ENCODE measurements at regions of chr4 and their contacts with region 1.

Region 1: DNA sequence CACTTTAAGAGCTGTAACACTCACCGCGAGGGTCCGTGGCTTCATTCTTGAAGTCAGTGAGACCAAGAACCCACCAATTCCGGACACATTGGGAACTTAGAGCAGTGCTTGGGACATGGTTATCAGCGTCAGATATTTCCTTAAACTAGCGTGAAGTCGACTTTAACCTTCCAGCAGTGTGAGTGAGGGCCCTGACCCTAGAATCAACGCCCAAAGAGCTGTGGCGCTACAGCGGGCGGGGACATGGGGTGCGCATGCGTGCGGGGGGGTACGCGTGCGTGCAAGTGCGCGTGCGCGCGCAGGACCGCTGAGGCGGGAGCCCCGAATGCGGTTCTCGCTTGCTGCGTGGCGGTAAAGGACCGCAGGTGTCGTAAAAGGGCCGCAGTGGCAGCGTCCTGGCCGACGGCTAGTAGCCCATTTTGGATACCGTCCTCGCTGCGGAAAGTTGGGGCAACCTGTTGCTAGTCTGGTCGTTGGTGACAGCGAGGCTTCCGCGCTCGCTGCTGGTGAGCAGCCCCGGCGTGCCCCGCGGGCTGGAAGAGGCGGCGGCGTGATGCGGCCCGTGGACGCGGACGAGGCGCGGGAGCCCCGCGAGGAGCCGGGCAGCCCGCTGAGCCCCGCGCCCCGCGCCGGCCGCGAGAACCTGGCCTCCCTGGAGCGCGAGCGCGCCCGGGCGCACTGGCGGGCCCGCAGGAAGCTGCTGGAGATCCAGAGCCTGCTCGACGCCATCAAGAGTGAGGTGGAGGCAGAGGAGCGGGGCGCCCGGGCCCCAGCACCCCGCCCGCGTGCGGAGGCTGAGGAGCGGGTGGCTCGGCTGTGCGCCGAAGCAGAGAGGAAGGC is 19.8 kb upstream of the S100P start:
- DNase-seq: peak; percentile 95
- ATAC-seq: peak; percentile 81
- H3K4me3 Mint-ChIP-seq: peak overlapping the region; percentile 90
- H3K27ac Mint-ChIP-seq: peak overlapping the region; percentile 99
- H3K4me1 Mint-ChIP-seq: peaks cover 42% of the 10 kb centered on the region
- H3K27me3 Mint-ChIP-seq: no peaks in the 10 kb centered on the region
- CTCF ChIP-seq: no peak

Region 2: DNA sequence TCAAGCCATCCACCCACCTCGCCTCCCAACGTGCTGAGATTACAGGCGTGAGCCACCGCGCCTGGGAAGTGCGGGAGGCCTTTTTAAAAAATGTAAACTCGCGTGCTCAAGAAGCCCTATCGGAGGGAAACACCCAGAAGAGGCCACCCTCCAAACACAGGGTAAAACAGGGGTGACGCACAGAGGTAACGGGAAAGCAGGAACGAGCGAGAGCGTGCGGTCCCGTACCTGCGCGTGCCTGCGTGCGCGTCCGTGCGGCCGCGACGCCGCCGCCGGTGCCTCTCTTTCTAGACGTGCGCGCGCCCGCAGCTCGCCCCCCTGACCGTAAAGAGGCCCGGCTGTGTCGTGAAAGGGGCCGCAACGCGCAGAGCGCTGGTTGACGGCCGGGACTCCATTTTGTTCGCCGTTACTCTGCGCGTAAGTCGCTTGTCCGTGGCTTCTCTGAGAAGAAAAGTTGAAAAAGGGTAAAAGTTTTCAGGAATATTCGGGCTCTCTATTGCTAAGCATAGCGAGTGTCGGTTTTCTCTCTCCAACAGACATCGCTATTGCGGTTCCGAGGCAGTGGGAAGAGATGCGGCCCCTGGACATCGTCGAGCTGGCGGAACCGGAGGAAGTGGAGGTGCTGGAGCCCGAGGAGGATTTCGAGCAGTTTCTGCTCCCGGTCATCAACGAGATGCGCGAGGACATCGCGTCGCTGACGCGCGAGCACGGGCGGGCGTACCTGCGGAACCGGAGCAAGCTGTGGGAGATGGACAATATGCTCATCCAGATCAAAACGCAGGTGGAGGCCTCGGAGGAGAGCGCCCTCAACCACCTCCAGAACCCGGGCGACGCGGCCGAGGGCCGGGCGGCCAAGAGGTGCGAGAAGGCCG is 33.4 kb before region 1 on chr4 and contains the start of gene MRFAP1:
- CTCF ChIA-PET with region 1: interaction called, 9 read pairs
- POLR2A ChIA-PET with region 1: interaction called, 68 read pairs
- intact Hi-C with region 1: no loop called
- DNase-seq: peak; percentile 96
- ATAC-seq: peak; percentile 84
- H3K4me3 Mint-ChIP-seq: peak within 1 kb of the TSS; percentile 98
- H3K27ac Mint-ChIP-seq: peak within 1 kb of the TSS; percentile 99
- H3K4me1 Mint-ChIP-seq: peaks cover 29% of the 10 kb centered on the region
- H3K27me3 Mint-ChIP-seq: no peaks in the 10 kb centered on the region
- CTCF ChIP-seq: no peak
- total RNA-seq, gene MRFAP1: 106 to 107 TPM

Region 3: GRCh38 chr4:6658597-6659075 is 15.2 kb before region 1 on chr4:
- CTCF ChIA-PET with region 1: interaction called, 10 read pairs
- POLR2A ChIA-PET with region 1: interaction called, 39 read pairs
- intact Hi-C with region 1: no loop called
- DNase-seq: peak; percentile 59
- ATAC-seq: peak; percentile 84
- H3K4me3 Mint-ChIP-seq: peak overlapping the region; percentile 57
- H3K27ac Mint-ChIP-seq: no peak overlapping the region
- H3K4me1 Mint-ChIP-seq: peaks cover 6% of the 10 kb centered on the region
- H3K27me3 Mint-ChIP-seq: peaks cover 16% of the 10 kb centered on the region
- CTCF ChIP-seq: no peak

Region 4: DNA sequence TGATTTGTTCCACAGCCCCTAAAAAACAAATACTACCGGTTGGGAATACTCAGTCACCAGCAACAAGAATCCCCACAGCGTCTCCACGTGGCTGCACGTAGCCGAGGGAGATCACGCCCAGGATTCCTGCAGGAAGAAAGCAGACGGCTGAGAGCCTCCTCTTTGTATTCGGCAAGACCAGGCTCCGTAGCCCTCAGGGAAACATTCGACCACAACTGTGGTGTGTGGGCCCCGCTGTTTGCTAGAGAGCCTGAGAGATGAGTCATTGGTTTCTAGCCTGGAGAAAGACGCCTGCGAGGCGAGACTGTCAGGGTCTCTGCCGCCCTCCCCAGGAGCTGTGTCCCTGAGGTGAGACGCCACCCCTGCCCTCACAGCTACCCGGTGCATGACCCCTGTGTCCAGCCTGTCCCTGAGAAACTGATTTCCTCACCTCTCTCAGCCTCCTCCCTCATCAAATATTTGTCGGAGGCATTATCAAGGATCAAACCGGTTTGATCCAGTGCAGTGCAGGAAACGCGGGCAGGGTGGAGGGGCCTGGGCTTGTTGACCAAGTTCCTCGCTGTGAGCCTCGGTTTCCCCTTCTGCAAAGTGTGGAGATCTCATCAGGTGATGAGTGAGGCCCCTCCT is 15.1 kb after region 1 on chr4:
- CTCF ChIA-PET with region 1: interaction called, 40 read pairs
- POLR2A ChIA-PET with region 1: interaction called, 74 read pairs
- intact Hi-C with region 1: loop called (anchors 2 kb)
- DNase-seq: peak; percentile 96
- ATAC-seq: peak; percentile 85
- H3K4me3 Mint-ChIP-seq: peak overlapping the region; percentile 74
- H3K27ac Mint-ChIP-seq: peak overlapping the region; percentile 93
- H3K4me1 Mint-ChIP-seq: peaks cover 70% of the 10 kb centered on the region
- H3K27me3 Mint-ChIP-seq: no peaks in the 10 kb centered on the region
- CTCF ChIP-seq: no peak

Region 5: DNA sequence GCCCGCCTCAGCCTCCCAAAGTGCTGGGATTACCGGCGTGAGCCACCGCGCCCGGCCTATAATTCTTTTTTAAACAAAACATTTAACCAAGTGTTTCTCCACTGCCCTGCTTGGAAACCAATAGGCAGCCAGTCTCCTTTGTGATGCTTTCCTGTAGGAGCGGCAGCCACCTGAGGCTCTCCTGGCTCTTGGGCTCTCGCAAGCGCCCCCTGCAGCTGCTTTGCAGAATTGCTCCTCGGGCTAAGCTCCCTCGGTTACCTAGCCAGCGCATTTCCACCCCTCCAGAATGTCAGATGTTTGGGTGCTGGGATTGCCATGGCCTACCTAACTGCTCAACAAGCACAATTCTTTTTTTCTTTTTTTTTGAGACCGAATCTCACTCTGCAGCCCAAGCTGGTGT is 27.5 kb after region 1 on chr4:
- CTCF ChIA-PET with region 1: interaction called, 102 read pairs
- POLR2A ChIA-PET with region 1: interaction called, 75 read pairs
- intact Hi-C with region 1: loop called (anchors 5 kb)
- DNase-seq: peak; percentile 63
- ATAC-seq: no peak
- H3K4me3 Mint-ChIP-seq: no peak overlapping the region
- H3K27ac Mint-ChIP-seq: no peak overlapping the region
- H3K4me1 Mint-ChIP-seq: peaks cover 63% of the 10 kb centered on the region
- H3K27me3 Mint-ChIP-seq: no peaks in the 10 kb centered on the region
- CTCF ChIP-seq: peak; percentile 61

Region 6: DNA sequence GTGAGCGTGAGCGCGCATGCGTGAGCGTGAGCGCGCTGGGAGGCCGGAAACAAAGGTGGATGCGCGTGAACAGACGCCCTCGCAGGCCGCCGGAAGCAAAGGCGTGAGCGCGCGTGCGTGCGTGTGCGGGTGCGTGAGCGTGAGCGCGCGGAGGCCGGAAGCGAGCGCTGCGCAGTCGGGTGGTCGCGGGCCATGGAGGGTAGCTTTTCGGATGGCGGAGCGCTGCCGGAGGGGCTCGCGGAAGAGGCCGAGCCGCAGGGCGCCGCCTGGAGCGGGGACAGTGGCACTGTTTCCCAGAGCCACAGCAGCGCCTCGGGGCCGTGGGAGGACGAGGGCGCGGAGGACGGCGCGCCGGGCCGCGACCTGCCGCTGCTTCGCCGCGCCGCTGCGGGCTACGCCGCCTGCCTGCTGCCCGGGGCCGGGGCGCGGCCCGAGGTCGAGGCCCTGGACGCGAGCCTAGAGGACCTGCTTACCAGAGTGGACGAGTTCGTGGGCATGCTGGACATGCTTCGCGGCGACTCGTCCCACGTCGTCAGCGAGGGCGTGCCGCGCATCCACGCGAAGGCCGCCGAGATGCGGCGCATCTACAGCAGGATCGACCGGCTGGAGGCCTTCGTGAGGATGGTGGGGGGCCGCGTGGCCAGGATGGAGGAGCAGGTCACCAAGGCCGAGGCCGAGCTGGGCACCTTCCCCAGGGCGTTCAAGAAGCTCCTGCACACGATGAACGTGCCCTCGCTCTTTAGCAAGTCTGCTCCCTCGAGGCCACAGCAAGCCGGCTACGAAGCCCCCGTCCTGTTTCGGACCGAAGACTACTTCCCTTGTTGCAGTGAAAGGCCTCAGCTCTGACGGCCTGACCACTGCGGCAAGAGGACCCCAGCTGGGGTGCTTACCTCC is 42.4 kb after region 1 on chr4 and contains the start of gene BLOC1S4:
- CTCF ChIA-PET with region 1: interaction called, 40 read pairs
- POLR2A ChIA-PET with region 1: interaction called, 75 read pairs
- intact Hi-C with region 1: loop called (anchors 5 kb)
- DNase-seq: peak; percentile 91
- ATAC-seq: peak; percentile 82
- H3K4me3 Mint-ChIP-seq: peak within 1 kb of the TSS; percentile 90
- H3K27ac Mint-ChIP-seq: peak within 1 kb of the TSS; percentile 92
- H3K4me1 Mint-ChIP-seq: peaks cover 31% of the 10 kb centered on the region
- H3K27me3 Mint-ChIP-seq: no peaks in the 10 kb centered on the region
- CTCF ChIP-seq: no peak
- total RNA-seq, gene BLOC1S4: 19.1 to 21.8 TPM

Region 7: DNA sequence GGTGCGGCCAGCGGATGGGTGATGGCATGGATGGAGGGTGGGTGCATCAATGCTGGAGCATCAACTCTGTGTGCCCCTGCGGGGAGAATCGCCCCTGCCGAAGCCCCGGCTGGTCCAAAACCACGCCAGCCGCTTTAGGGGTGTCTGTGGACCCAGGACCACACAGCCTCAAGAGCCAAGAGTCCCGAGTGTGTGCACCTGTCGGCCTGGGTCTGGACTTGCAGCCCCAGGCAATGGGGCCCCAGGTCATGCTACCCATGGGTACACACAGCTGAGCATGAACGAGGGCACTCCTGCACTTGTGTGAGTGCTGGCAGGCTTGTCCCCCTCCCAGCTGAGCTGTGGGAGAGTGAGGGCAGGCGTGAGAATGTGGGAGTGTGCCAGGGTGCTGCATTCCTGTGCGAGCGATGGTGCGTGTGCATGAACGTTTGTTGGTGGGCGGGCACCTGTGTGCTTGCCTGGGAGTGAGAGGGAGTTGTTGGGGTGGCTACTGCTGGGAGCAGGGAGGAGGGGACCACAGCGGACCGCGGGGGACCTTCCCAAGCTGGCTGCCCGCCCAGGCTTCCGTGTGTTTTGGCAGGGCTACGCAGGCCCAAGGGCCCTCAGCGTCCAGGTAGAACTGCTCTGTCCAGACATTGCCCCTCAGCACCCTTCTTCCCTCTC is 72.9 kb after region 1 on chr4:
- CTCF ChIA-PET with region 1: no interaction called
- POLR2A ChIA-PET with region 1: no interaction called
- intact Hi-C with region 1: no loop called
- DNase-seq: no peak
- ATAC-seq: no peak
- H3K4me3 Mint-ChIP-seq: no peak overlapping the region
- H3K27ac Mint-ChIP-seq: no peak overlapping the region
- H3K4me1 Mint-ChIP-seq: peaks cover 12% of the 10 kb centered on the region
- H3K27me3 Mint-ChIP-seq: no peaks in the 10 kb centered on the region
- CTCF ChIP-seq: no peak

Measured in activated CD8-positive, alpha-beta T cell treated with anti-CD3 and anti-CD28 coated beads for 36 hours (primary cell).